ENCODE measurements at regions of chr14 and their contacts with region 1.

Region 1: GRCh38 chr14:68911594-68912227 is 67.4 kb downstream of the ACTN1 start:
- DNase-seq: peak; percentile 87
- ATAC-seq: peak; percentile 91
- H3K4me3 Mint-ChIP-seq: no peak overlapping the region
- H3K27ac Mint-ChIP-seq: peak overlapping the region; percentile 58
- H3K4me1 Mint-ChIP-seq: peaks cover 37% of the 10 kb centered on the region
- H3K27me3 Mint-ChIP-seq: no peaks in the 10 kb centered on the region

Region 2: DNA sequence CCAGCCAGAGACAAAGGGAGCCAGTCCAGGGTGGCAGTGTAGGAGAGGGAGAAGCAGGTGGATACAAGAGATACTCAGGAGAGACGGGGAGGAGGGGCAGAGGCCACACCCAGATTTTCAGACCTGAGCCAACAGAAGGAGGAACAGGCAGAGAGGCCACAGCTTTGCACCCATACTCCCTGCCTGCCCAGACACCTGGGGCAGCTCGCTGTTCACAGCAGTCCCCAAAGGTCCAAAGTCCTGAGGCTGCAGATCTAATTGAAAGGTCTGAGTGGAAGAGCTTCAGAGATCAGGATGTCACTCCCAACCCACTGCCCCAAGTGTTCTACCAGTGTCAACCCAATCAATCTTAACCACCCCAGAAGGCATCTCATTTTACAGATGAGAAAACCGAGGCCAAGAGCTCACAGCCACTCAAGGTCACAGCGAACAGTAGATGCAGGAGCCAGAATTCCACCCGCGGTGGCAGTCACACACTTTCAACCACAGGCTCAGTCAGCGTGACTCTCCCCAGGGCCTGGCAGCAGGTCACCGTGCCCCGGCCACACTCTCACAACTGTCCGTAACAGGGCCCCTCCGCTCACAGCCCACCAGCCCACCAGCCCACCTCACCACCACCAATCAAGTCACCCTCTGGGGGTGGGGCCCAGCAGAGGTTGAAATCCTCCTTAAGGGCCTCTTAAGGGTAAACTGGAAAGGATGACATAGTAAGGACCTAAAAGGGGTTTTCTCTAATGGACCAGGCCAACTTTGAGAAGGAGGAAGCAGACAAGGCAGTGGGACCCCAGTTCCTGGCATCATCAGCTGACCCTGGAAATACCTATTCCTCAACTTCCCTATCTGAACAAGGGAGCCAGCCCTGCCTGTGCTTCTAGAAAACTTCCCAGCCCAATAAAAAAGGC is 34.1 kb after region 1 on chr14:
- CTCF ChIA-PET with region 1: interaction called, 10 read pairs
- POLR2A ChIA-PET with region 1: no interaction called
- intact Hi-C with region 1: no loop called
- DNase-seq: peak; percentile 22
- ATAC-seq: peak; percentile 36
- H3K4me3 Mint-ChIP-seq: no peak overlapping the region
- H3K27ac Mint-ChIP-seq: peak overlapping the region; percentile 68
- H3K4me1 Mint-ChIP-seq: peaks cover 86% of the 10 kb centered on the region
- H3K27me3 Mint-ChIP-seq: no peaks in the 10 kb centered on the region

Region 3: DNA sequence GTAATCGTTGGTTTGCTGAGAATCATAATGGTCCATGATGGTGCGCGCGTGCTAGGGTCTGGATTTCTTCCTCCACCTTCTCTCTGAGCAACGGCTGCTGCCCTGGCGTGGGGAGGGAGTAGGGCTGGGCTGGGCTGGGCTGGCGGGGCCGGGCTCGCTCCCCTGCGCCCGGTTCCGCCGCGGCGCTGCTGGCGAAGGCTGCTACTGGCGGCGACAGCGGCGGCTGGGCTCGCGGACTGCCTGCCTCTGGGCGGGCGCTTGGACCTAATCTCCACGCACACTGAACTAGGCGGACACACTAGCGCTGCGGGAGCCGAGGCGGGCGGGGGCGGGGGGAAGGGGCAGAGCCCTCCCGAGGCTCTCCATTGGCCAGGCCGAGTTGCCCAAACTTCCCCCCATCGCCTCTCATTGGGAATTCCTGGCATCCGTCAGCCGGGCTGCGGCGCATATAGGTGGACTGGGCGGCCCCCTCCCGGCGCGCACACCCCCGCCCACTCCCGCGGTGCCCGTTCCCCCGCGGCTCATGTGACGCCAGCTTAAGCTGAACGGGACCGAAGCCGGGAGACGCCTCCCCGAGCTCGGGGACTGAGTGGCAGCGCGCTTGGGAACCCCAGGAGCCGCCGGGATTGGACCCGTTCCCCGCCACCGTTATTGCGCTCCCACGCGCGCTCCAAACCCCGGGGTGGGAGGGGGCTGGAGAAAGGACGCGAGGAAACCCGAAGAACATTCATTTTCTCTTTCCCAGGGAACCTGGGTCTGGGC is 67.5 kb after region 1 on chr14 and contains the start of gene ACTN1:
- CTCF ChIA-PET with region 1: interaction called, 22 read pairs
- POLR2A ChIA-PET with region 1: no interaction called
- intact Hi-C with region 1: loop called (anchors 1 to 2 kb)
- DNase-seq: peak; percentile 84
- ATAC-seq: peak; percentile 72
- H3K4me3 Mint-ChIP-seq: peak within 1 kb of the TSS; percentile 79
- H3K27ac Mint-ChIP-seq: peak within 1 kb of the TSS; percentile 88
- H3K4me1 Mint-ChIP-seq: peaks cover 38% of the 10 kb centered on the region
- H3K27me3 Mint-ChIP-seq: peaks cover 2% of the 10 kb centered on the region
- total RNA-seq, gene ACTN1: 92.8 to 146 TPM

Region 4: GRCh38 chr14:69013943-69014775 is 102.4 kb after region 1 on chr14:
- CTCF ChIA-PET with region 1: interaction called, 14 read pairs
- POLR2A ChIA-PET with region 1: no interaction called
- intact Hi-C with region 1: no loop called
- DNase-seq: no peak
- ATAC-seq: no peak
- H3K4me3 Mint-ChIP-seq: no peak overlapping the region
- H3K27ac Mint-ChIP-seq: no peak overlapping the region
- H3K4me1 Mint-ChIP-seq: peaks cover 6% of the 10 kb centered on the region
- H3K27me3 Mint-ChIP-seq: no peaks in the 10 kb centered on the region

Region 5: DNA sequence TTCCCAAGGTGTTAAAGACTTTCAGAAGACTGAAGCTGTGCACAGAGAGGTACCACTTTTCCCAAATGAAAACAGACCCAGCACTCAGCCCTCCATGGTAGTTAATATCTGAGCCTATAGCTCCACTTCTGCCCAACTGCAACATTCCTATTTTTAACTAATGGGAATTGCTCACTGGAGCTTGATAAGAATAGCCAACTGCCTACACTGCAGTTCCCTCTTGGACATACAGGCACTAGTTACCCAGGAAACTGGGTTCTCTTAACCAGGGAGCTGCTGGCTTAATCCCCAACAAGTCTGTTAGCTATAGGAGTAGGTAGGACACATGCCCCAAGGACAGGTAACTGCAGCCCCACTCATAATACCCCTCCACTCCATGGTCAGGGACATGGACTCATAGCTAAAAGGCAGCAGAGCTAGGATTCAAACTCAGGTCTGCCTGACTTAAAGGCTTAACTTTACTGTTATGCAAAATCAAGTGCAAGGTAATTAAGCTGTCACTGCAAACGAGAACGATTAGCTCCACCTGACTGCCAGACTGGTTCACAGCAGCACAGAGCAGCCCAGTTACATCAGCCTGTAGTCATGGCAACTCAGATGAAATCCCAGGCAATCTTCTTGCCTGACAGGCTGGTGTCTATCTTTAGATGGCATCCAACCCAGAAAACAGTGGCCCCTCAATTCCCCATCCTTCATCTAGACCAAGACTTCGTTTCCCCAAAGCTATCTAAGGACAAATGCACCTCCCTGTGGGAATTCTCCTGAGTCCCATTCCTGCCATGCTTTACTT is 144.5 kb after region 1 on chr14:
- CTCF ChIA-PET with region 1: interaction called, 10 read pairs
- POLR2A ChIA-PET with region 1: no interaction called
- intact Hi-C with region 1: loop called in 1 of 2 experiments (anchors 1 kb)
- DNase-seq: peak; percentile 50
- ATAC-seq: peak; percentile 71
- H3K4me3 Mint-ChIP-seq: no peak overlapping the region
- H3K27ac Mint-ChIP-seq: peak overlapping the region; percentile 47
- H3K4me1 Mint-ChIP-seq: peaks cover 19% of the 10 kb centered on the region
- H3K27me3 Mint-ChIP-seq: no peaks in the 10 kb centered on the region

Region 6: GRCh38 chr14:69101331-69101826 is 189.7 kb after region 1 on chr14:
- CTCF ChIA-PET with region 1: interaction called, 70 read pairs
- POLR2A ChIA-PET with region 1: no interaction called
- intact Hi-C with region 1: loop called in 1 of 2 experiments (anchors 1 kb)
- DNase-seq: no peak
- ATAC-seq: peak; percentile 91
- H3K4me3 Mint-ChIP-seq: no peak overlapping the region
- H3K27ac Mint-ChIP-seq: peak overlapping the region; percentile 87
- H3K4me1 Mint-ChIP-seq: peaks cover 15% of the 10 kb centered on the region
- H3K27me3 Mint-ChIP-seq: no peaks in the 10 kb centered on the region